Common myeloid progenitor, CD34-positive (primary cell): ENCODE measurements at regions of chr22 and their contacts with region 1.

Region 1: DNA sequence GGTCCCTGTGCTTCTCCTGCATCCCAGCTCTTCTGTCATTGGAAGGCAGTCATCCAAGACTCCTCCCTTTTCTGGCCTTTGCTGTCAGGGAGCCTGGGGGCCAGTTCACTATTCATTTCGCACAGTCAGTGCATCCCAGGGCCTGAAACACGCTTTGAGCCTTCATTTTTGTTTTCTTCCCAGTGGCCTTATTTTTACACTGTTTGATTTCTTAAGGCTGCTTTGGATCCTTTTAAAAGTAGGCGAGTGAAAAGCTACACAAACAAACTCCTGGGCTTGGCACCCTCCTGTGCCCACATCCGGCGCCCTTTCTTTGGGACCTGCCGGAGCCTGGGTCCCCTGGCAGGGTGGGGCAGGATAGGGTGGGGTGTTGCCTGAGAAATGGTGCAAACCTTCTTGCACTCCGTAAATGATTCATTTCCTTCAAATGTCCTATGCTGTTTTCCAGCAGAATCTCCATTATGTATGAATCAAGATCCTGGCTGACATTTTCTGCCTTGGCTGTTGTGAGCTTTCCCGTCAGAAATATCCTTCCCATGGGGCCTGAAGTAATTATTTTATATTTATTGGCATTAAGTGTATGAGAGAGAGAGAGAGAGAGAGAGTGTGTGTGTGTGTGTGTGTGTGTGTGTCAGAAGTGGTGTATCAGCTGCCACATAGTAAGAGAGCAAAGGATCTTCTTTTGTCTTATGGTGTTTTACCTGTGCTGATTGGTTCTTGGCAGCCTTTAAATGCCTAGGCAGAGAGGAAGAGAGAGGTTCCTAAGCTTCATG is 45.6 kb downstream of the BCR start:
- DNase-seq: peak in 1 of 3 donors; percentile 35
- H3K4me3 ChIP-seq: peak overlapping the region in 2 of 7 experiments; percentile 33 to 50
- H3K27ac ChIP-seq: peak overlapping the region; percentile 56 to 81
- H3K4me1 ChIP-seq: peaks cover 27 to 72% (median 62%) of the 10 kb centered on the region in 4 experiments
- H3K27me3 ChIP-seq: no peaks in the 10 kb centered on the region

Region 2: GRCh38 chr22:23212061-23213021 is 13.6 kb before region 1 on chr22:
- CTCF ChIA-PET with region 1: interaction called, 10 read pairs
- POLR2A ChIA-PET with region 1: interaction called, 5 read pairs
- DNase-seq: peak in 2 of 3 donors; percentile 66 to 78
- H3K4me3 ChIP-seq: peak overlapping the region in 5 of 7 experiments; percentile 4 to 53 (median 34)
- H3K27ac ChIP-seq: peak overlapping the region; percentile 61 to 91
- H3K4me1 ChIP-seq: peaks cover 33 to 80% (median 69%) of the 10 kb centered on the region in 4 experiments
- H3K27me3 ChIP-seq: no peaks in the 10 kb centered on the region

Region 3: GRCh38 chr22:23240639-23241389 is 14.9 kb after region 1 on chr22:
- CTCF ChIA-PET with region 1: interaction called, 13 read pairs
- POLR2A ChIA-PET with region 1: interaction called, 5 read pairs
- DNase-seq: peak; percentile 66 to 82 (median 79)
- H3K4me3 ChIP-seq: peak overlapping the region in 2 of 7 experiments; percentile 8 to 24
- H3K27ac ChIP-seq: peak overlapping the region in 1 of 2 experiments; percentile 62
- H3K4me1 ChIP-seq: peaks cover 6 to 87% (median 43%) of the 10 kb centered on the region in 4 experiments
- H3K27me3 ChIP-seq: no peaks in the 10 kb centered on the region